Sigmoid colon (tissue), 7 donors: ENCODE measurements at regions of chr16 and their contacts with region 1.

Region 1: DNA sequence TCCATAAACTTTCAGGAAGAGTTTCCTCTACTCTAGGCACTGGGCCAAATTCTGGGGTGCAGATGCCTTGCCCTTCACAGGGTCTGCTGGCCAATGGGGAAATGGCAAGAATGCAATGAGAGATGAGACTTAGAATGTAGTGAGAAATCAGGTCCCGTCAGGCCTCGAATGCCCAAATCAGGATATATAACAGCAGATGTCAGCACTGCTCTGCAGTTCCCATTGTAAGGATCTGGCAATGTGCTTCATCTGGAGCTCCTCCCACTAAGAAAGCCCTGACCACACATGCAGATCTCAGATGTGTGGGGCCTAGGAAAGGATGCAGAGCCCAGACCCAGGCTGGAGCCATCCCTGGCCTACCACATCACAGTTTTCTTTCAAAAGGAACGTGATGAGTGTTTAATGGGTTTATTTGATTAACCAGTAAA is 13.9 kb upstream of the LPCAT2 start:
- DNase-seq: peak; percentile 75
- H3K4me3 ChIP-seq: no peak overlapping the region
- H3K27ac ChIP-seq: peak overlapping the region in 1 of 4 donors; percentile 27
- H3K4me1 ChIP-seq: peaks cover 0 to 21% (median 16%) of the 10 kb centered on the region in 4 donors
- H3K27me3 ChIP-seq: no peaks in the 10 kb centered on the region
- CTCF ChIP-seq: peak in 2 of 4 experiments; percentile 26 to 30
- EP300 ChIP-seq: no peak
- POLR2A ChIP-seq: no peak

Region 2: DNA sequence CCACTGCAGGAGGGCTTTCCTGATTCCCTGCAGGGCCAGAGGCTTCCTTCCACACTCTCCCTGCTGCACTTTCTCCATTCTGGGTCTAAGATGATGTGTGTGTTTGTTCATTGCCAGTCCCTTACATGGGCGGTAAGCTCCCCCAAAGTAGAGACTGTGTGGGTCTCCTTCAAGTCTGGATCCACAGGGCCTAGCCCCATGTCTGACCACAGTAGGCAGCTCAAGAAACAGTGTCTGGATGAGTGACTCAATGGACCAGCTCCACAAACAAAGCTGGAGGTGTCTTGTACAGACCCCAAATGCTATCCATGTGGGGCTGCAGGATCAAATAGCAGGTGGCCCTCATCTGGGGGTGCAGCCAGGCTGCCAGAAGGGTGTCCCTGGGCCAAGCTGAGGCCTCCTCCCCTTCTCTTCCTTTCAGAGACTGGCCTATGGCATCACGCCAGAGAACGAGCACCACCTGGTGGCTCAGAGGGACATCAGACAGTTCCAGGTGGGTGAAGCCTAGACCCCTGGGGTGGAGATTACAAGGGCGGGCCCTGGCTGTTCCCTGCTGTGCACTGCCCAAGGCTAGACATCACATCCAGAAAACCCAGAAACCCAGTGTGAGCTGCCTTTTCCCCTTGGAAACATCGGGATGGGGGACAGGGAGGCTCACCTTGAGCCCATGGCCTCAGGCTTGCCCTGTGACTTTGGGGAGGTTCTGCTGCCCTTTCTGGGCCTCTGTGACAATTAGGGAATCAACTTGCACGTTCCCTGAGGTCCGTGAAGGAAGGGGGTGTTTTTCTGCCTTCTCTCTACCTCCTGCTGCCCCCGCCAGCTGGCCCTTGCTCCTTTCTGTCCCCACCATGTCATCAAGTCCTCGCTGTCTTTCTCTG is 206.7 kb after region 1 on chr16:
- intact Hi-C with region 1: loop called (anchors 10 kb)
- DNase-seq: peak; percentile 73
- H3K4me3 ChIP-seq: no peak overlapping the region
- H3K27ac ChIP-seq: no peak overlapping the region
- H3K4me1 ChIP-seq: no peaks in the 10 kb centered on the region
- H3K27me3 ChIP-seq: peaks cover 0 to 5% (median 2%) of the 10 kb centered on the region in 3 donors
- CTCF ChIP-seq: peak in 3 of 4 experiments; percentile 42 to 57 (median 44)
- EP300 ChIP-seq: no peak
- POLR2A ChIP-seq: no peak

Region 3: GRCh38 chr16:56203052-56203451 is 708.0 kb after region 1 on chr16:
- intact Hi-C with region 1: no loop called
- DNase-seq: no peak
- H3K4me3 ChIP-seq: no peak overlapping the region
- H3K27ac ChIP-seq: peak overlapping the region in 3 of 4 donors; percentile 49 to 68 (median 63)
- H3K4me1 ChIP-seq: peaks cover 0 to 80% (median 53%) of the 10 kb centered on the region in 4 donors
- H3K27me3 ChIP-seq: no peaks in the 10 kb centered on the region
- CTCF ChIP-seq: peak in 1 of 4 experiments; percentile 14
- EP300 ChIP-seq: no peak
- POLR2A ChIP-seq: no peak